Activated CD4-positive, alpha-beta T cell treated with anti-CD3 and anti-CD28 coated beads, Interleukin-2, amount 10 ng/mL, durations not matched to agents 24 days and 14 days (primary cell): ENCODE measurements at regions of chr6 and their contacts with region 1.

Region 1: GRCh38 chr6:5260661-5261544 is at the starts of genes FARS2 and LYRM4:
- DNase-seq: peak; percentile 98
- H3K4me3 Mint-ChIP-seq: peak within 1 kb of the TSS; percentile 89
- H3K27ac Mint-ChIP-seq: peak within 1 kb of the TSS; percentile 100
- H3K4me1 Mint-ChIP-seq: peaks cover 36% of the 10 kb centered on the region
- H3K27me3 Mint-ChIP-seq: no peaks in the 10 kb centered on the region
- total RNA-seq, gene FARS2: 21.5 and 24.7 TPM in 2 replicates
- total RNA-seq, gene LYRM4: 49.4 and 50.3 TPM in 2 replicates

Region 2: GRCh38 chr6:4870821-4871494 is 389.9 kb before region 1 on chr6:
- intact Hi-C with region 1: no loop called
- DNase-seq: no peak
- H3K4me3 Mint-ChIP-seq: no peak overlapping the region
- H3K27ac Mint-ChIP-seq: no peak overlapping the region
- H3K4me1 Mint-ChIP-seq: peaks cover 4% of the 10 kb centered on the region
- H3K27me3 Mint-ChIP-seq: no peaks in the 10 kb centered on the region

Region 3: GRCh38 chr6:5003604-5004372 is 257.1 kb before region 1 on chr6 and contains the start of gene RPP40:
- intact Hi-C with region 1: loop called (anchors 1 kb)
- DNase-seq: peak; percentile 100
- H3K4me3 Mint-ChIP-seq: peak within 1 kb of the TSS; percentile 95
- H3K27ac Mint-ChIP-seq: peak within 1 kb of the TSS; percentile 98
- H3K4me1 Mint-ChIP-seq: peaks cover 12% of the 10 kb centered on the region
- H3K27me3 Mint-ChIP-seq: no peaks in the 10 kb centered on the region
- total RNA-seq, gene RPP40: 14.2 and 16.4 TPM in 2 replicates

Region 4: DNA sequence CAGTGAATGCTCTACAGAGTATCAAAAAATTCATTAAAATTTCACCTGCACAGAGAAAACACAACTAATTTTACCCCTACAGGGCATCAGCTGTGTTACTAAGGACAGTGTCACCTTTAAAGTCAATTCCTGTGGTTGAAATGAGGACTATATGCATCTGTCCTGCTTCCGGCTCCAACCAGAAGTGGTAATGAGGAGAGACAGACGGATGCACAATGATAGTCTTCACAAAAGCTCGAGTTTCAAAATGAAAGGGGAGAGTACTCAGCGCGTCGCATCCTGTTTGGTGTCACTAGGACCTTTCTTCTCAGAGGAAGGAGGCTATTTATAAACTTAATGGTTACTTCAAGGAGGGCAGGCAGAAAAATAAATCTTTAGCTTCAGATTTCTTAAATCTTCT is 86.7 kb before region 1 on chr6:
- intact Hi-C with region 1: loop called (anchors 1 kb)
- DNase-seq: peak; percentile 91
- H3K4me3 Mint-ChIP-seq: peak overlapping the region; percentile 70
- H3K27ac Mint-ChIP-seq: peak overlapping the region; percentile 82
- H3K4me1 Mint-ChIP-seq: peaks cover 38% of the 10 kb centered on the region
- H3K27me3 Mint-ChIP-seq: no peaks in the 10 kb centered on the region

Region 5: DNA sequence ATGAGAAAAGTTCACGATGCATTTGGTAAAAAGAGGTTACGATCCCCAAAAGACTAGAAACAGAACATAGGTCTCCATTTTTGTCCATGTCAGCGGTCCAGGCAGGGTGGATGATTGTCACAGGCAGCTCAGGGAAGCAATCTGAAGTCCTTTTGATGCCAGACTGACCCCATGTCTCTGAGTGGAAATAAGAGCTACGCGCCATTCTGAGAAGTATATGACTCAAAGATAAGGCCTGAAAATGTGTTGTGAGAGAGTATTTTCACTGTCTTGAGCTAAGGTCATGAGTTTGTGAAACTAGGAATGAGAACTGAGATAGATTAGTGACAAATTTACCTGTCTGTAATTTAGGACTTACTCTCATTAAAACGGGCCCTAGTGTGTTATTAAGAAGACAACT is 69.7 kb before region 1 on chr6:
- intact Hi-C with region 1: no loop called
- DNase-seq: no peak
- H3K4me3 Mint-ChIP-seq: no peak overlapping the region
- H3K27ac Mint-ChIP-seq: no peak overlapping the region
- H3K4me1 Mint-ChIP-seq: peaks cover 3% of the 10 kb centered on the region
- H3K27me3 Mint-ChIP-seq: no peaks in the 10 kb centered on the region

Region 6: DNA sequence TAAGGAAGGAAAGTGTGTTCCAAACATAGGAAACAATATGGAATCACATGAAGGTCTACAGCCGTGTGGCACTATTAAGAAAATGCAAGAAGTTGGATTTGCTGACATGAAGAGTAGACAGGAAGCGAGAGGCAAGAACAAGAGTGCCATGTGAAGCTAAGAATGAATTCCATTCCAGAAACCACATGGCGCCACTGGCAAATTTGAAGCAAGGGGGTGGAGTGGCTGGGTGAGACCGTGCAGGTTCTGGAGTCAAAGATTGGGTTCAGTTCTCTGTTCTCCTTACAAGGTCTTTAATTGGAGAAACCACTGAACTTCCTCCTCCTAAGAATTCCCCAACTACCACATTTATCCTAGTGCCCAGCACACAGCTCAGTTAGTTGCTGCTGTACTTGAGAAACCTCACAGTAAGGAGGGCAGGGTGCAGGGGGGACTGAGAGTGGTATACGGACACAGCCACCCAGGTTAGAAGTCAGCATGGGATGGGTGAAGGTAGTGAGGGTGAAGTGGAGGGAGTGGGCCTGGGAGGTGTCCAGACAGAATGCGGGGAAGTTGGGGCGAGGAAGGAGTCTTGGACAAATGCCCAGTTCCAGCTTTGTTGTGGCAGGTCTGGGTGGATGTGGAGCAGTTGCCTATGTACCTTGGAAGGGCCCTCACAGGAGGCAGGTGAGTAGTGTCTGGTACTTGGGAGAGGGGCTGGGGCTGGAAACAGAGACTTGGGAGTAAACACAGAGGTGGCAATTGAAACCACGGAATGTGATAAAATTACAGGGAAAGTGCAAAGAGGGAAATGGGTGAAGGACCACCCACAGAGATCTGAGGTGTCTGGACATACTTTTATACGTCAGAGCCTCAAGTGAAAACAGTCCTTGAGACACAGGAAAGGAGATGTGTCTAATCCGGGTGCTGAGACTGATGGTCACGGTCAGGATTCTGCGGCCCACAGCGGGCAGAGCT is 14.5 kb before region 1 on chr6:
- intact Hi-C with region 1: no loop called
- DNase-seq: no peak
- H3K4me3 Mint-ChIP-seq: no peak overlapping the region
- H3K27ac Mint-ChIP-seq: no peak overlapping the region
- H3K4me1 Mint-ChIP-seq: peaks cover 3% of the 10 kb centered on the region
- H3K27me3 Mint-ChIP-seq: no peaks in the 10 kb centered on the region

Region 7: GRCh38 chr6:5279891-5280338 is 19.0 kb after region 1 on chr6:
- intact Hi-C with region 1: loop called (anchors 1 kb)
- DNase-seq: peak; percentile 74
- H3K4me3 Mint-ChIP-seq: peak overlapping the region; percentile 31
- H3K27ac Mint-ChIP-seq: peak overlapping the region; percentile 88
- H3K4me1 Mint-ChIP-seq: peaks cover 38% of the 10 kb centered on the region
- H3K27me3 Mint-ChIP-seq: no peaks in the 10 kb centered on the region

Region 8: GRCh38 chr6:5379647-5380242 is 118.8 kb after region 1 on chr6:
- intact Hi-C with region 1: loop called (anchors 5 kb)
- DNase-seq: peak; percentile 79
- H3K4me3 Mint-ChIP-seq: no peak overlapping the region
- H3K27ac Mint-ChIP-seq: no peak overlapping the region
- H3K4me1 Mint-ChIP-seq: no peaks in the 10 kb centered on the region
- H3K27me3 Mint-ChIP-seq: no peaks in the 10 kb centered on the region